PC-3 (cell line): ENCODE measurements at regions of chr2 and their contacts with region 1.

Region 1: GRCh38 chr2:133561045-133561852 is 7.0 kb downstream of the NCKAP5 start:
- DNase-seq: peak; percentile 81
- ATAC-seq: peak; percentile 91
- H3K4me3 ChIP-seq: no peak overlapping the region
- H3K27ac ChIP-seq: peak overlapping the region; percentile 67
- H3K4me1 ChIP-seq: peaks cover 27% of the 10 kb centered on the region
- H3K27me3 ChIP-seq: no peaks in the 10 kb centered on the region
- CTCF ChIP-seq: peak; percentile 90

Region 2: GRCh38 chr2:132267105-132267497 is 1294.1 kb before region 1 on chr2:
- CTCF ChIA-PET with region 1: no interaction called
- POLR2A ChIA-PET with region 1: no interaction called
- intact Hi-C with region 1: loop called (anchors 10 kb)
- DNase-seq: no peak
- ATAC-seq: no peak
- H3K4me3 ChIP-seq: no peak overlapping the region
- H3K27ac ChIP-seq: no peak overlapping the region
- H3K4me1 ChIP-seq: peaks cover 8% of the 10 kb centered on the region; the same call in 1 of the 2 replicates
- H3K27me3 ChIP-seq: no peaks in the 10 kb centered on the region
- CTCF ChIP-seq: no peak

Region 3: GRCh38 chr2:133171393-133172004 is 389.8 kb before region 1 on chr2:
- CTCF ChIA-PET with region 1: interaction called, 4 read pairs
- POLR2A ChIA-PET with region 1: no interaction called
- intact Hi-C with region 1: loop called (anchors 2 kb)
- DNase-seq: peak; percentile 84
- ATAC-seq: peak; percentile 56
- H3K4me3 ChIP-seq: no peak overlapping the region
- H3K27ac ChIP-seq: no peak overlapping the region
- H3K4me1 ChIP-seq: peaks cover 11% of the 10 kb centered on the region
- H3K27me3 ChIP-seq: no peaks in the 10 kb centered on the region
- CTCF ChIP-seq: peak; percentile 84

Region 4: DNA sequence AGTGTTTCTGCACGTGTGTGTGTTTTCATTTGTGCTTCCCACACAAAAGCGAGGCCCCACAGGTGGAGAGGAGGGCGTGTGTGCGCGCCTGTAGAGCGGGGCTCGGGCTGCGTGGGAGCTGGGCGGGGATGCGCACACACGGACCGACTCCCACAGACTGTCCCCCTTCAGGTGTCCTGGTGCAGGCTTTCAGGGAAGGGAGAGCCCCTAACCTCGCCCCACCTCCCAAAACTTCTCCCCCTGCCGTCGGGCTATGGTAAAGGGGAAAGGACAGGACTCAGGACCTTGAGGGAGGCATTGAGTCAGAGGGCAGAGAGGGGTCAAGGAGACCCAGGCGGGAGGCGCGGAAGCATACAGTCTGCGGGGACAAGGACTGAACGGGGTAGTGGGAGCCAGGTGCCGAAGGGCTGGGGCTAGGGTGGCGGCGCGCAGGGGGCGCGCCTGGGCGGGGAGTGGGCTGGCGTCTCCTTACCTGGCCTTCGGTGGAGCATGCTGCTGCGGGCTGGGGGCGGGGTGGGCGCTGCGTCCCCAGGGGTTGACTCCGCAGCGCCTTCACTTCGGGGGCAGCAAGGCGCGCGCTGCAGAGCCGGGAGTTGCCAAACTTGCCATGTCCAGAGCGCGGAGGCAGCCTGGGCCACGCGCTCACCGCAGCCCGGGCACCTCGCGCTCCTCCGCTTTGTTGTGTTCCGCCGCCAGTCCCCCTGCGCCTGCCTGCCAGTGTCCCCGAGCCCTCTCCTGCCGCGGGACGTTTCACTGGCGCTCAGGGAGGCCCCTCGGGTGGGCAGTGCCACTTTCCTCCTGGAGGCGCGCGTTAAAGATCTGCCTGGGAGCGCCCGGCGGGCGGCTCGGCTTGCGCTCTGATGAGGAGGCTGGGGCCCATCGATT is 295.0 kb before region 1 on chr2:
- CTCF ChIA-PET with region 1: interaction called, 30 read pairs
- POLR2A ChIA-PET with region 1: interaction called, 8 read pairs
- intact Hi-C with region 1: loop called (anchors 1 kb)
- DNase-seq: peak; percentile 28
- ATAC-seq: peak; percentile 29
- H3K4me3 ChIP-seq: peak overlapping the region; percentile 76
- H3K27ac ChIP-seq: peak overlapping the region; percentile 38
- H3K4me1 ChIP-seq: peaks cover 47% of the 10 kb centered on the region
- H3K27me3 ChIP-seq: no peaks in the 10 kb centered on the region
- CTCF ChIP-seq: peak; percentile 54; the same call in 1 of the 2 replicates

Region 5: DNA sequence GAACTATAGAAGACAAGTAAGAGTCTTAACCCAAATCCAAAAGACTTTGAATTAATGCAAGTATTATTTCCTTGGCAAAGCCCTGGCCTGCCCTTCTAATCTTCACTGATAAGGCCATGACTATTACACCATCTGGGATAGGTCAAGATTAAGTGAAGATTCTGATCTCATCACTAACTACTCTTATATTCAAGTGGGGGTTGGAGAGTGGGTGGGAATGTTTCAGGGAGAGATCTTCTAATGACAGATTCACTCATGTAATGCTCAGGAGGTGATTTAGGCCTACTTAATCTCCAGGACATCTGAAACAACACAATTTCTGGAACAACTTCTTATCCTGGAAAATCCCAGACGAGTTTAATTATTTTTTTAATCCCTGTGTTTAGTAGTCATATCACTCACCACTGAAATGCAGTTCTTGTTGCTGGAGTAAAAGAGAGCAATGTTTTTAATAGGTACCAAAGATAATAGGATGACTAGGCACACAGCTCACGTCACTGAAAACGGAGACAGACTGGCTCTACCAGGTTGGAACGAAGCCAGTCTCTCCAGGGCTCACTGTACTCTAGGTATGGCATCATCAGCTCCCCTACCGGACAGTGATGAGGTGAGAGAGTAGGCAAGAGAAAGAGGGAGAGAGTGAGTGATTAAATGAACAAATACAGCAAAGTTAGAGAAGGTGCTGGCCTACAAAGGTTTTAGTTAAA is 126.1 kb before region 1 on chr2:
- CTCF ChIA-PET with region 1: no interaction called
- POLR2A ChIA-PET with region 1: no interaction called
- intact Hi-C with region 1: loop called (anchors 1 kb)
- DNase-seq: peak; percentile 65
- ATAC-seq: no peak
- H3K4me3 ChIP-seq: no peak overlapping the region
- H3K27ac ChIP-seq: no peak overlapping the region
- H3K4me1 ChIP-seq: peaks cover 16% of the 10 kb centered on the region
- H3K27me3 ChIP-seq: no peaks in the 10 kb centered on the region
- CTCF ChIP-seq: peak; percentile 24; the same call in 1 of the 2 replicates

Region 6: GRCh38 chr2:133641497-133641896 is 80.2 kb after region 1 on chr2:
- CTCF ChIA-PET with region 1: no interaction called
- POLR2A ChIA-PET with region 1: no interaction called
- intact Hi-C with region 1: no loop called
- DNase-seq: peak; percentile 98
- ATAC-seq: peak; percentile 94
- H3K4me3 ChIP-seq: peak overlapping the region; percentile 46; the same call in 1 of the 2 replicates
- H3K27ac ChIP-seq: peak overlapping the region; percentile 72
- H3K4me1 ChIP-seq: peaks cover 33% of the 10 kb centered on the region
- H3K27me3 ChIP-seq: no peaks in the 10 kb centered on the region
- CTCF ChIP-seq: peak; percentile 80

Region 7: GRCh38 chr2:133737242-133737993 is 176.2 kb after region 1 on chr2:
- CTCF ChIA-PET with region 1: no interaction called
- POLR2A ChIA-PET with region 1: no interaction called
- intact Hi-C with region 1: no loop called
- DNase-seq: no peak
- ATAC-seq: no peak
- H3K4me3 ChIP-seq: no peak overlapping the region
- H3K27ac ChIP-seq: no peak overlapping the region
- H3K4me1 ChIP-seq: no peaks in the 10 kb centered on the region
- H3K27me3 ChIP-seq: no peaks in the 10 kb centered on the region
- CTCF ChIP-seq: no peak

Region 8: GRCh38 chr2:133780099-133780839 is 219.0 kb after region 1 on chr2:
- CTCF ChIA-PET with region 1: interaction called, 5 read pairs
- POLR2A ChIA-PET with region 1: no interaction called
- intact Hi-C with region 1: loop called (anchors 1 kb)
- DNase-seq: peak; percentile 94
- ATAC-seq: peak; percentile 20; the same call in 1 of the 2 replicates
- H3K4me3 ChIP-seq: no peak overlapping the region
- H3K27ac ChIP-seq: no peak overlapping the region
- H3K4me1 ChIP-seq: peaks cover 23% of the 10 kb centered on the region
- H3K27me3 ChIP-seq: no peaks in the 10 kb centered on the region
- CTCF ChIP-seq: peak; percentile 95